Endothelial cell of umbilical vein (primary cell): ENCODE measurements at regions of chr11 and their contacts with region 1.

Region 1: GRCh38 chr11:126268708-126269579 is at the starts of genes FOXRED1 and SRPRA:
- DNase-seq: peak; percentile 99
- H3K4me3 ChIP-seq: peak within 1 kb of the TSS; percentile 81 to 92 (median 87)
- H3K27ac ChIP-seq: peak within 1 kb of the TSS; percentile 82
- H3K4me1 ChIP-seq: peaks cover 12% of the 10 kb centered on the region
- H3K27me3 ChIP-seq: no peaks in the 10 kb centered on the region
- CTCF ChIP-seq: no peak
- POLR2A ChIP-seq: peak; percentile 92
- total RNA-seq, gene FOXRED1: 31.0 and 33.5 TPM in 2 replicates
- total RNA-seq, gene SRPRA: 104 and 106 TPM in 2 replicates

Region 2: DNA sequence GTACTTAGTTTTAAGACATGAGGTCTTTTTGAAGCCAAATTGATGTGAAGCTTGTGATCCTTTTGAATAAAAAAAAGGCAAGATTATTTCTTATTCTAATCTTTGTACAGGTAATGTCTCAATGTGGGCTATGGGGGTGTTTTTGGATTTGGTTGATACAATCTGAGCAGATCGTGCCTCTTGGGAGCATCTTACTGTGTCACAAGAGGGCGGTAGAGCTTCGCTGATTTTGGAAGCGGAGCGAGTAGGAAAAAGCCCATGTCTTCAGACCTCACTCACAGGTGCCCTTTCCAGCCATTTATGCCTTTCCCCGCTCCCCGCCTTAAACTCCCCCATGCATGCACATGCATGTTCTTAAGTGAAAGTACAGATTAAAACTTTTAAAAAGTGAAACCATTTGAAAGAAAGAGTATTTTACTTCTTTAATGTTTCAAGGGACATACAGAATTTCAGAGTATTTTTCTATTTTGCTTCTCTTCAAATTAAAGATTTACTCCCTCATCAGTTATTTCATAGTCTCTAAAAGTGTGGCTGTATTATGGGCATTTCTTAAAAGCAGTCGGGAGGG is 345.8 kb before region 1 on chr11:
- CTCF ChIA-PET with region 1: no interaction called
- POLR2A ChIA-PET with region 1: no interaction called
- dilution Hi-C with region 1: no loop called
- intact Hi-C with region 1: loop called (anchors 10 kb)
- DNase-seq: peak; percentile 69
- H3K4me3 ChIP-seq: no peak overlapping the region
- H3K27ac ChIP-seq: no peak overlapping the region
- H3K4me1 ChIP-seq: no peaks in the 10 kb centered on the region
- H3K27me3 ChIP-seq: peaks cover 2 to 7% of the 10 kb centered on the region in 2 experiments
- CTCF ChIP-seq: peak; percentile 73 to 74
- POLR2A ChIP-seq: no peak

Region 3: GRCh38 chr11:126282736-126283591 is 14.0 kb after region 1 on chr11 and contains the start of gene TIRAP:
- CTCF ChIA-PET with region 1: no interaction called
- POLR2A ChIA-PET with region 1: no interaction called
- dilution Hi-C with region 1: no loop called
- intact Hi-C with region 1: loop called (anchors 1 kb)
- DNase-seq: peak; percentile 55
- H3K4me3 ChIP-seq: peak within 1 kb of the TSS; percentile 19 to 62 (median 50)
- H3K27ac ChIP-seq: peak within 1 kb of the TSS; percentile 26
- H3K4me1 ChIP-seq: peaks cover 13% of the 10 kb centered on the region
- H3K27me3 ChIP-seq: no peaks in the 10 kb centered on the region
- CTCF ChIP-seq: peak in 1 of 2 donors; percentile 13
- POLR2A ChIP-seq: peak; percentile 70
- total RNA-seq, gene TIRAP: 8.7 and 11.0 TPM in 2 replicates